Left cardiac atrium (tissue), 4 donors: ENCODE measurements at regions of chr9 and their contacts with region 1.

Region 1: DNA sequence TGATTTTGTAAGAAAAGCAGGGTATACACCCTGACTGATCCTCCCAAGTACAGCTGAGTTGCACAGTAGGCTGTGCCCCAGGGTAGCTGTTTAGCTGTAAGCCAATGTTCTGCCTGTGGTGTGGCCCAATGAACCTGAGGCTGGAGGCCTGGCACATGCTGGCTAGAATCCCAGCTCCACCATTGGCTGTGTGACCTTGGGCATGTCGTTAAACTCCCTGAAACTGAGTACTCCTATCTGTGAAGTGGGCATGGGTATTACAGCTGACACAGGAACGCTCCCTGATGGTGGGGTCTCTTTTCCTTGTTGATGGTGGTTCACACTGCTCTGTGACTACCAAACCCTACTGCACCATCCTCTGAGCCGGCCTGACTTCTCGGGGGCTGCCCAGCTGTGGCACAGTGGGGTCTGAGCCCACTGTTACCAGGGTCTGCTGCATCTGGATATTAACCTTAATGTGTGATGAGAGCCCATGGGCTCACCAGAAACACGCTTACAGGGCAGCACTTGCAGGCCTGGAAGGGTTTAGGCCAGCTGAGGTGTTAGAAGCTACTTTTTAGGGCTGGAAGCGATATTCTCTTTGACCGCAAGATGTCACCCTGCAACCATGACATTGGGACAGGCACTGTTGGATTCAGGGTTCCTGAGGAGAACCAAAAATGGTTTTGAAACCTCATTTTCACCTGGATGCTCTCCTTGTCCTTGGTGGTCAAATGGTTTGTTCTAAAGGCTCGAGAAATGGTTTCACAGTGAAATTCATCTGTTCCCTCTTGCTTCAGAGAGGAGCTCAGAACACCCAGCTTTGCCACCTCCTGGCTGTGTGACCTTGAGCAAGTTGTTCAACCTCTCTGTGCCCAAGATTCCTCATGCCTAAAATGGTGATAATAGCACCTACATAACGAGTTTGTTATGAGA is 6.8 kb upstream of the GADD45G start:
- DNase-seq: peak; percentile 40
- ATAC-seq: peak; percentile 44 to 63

Region 2: DNA sequence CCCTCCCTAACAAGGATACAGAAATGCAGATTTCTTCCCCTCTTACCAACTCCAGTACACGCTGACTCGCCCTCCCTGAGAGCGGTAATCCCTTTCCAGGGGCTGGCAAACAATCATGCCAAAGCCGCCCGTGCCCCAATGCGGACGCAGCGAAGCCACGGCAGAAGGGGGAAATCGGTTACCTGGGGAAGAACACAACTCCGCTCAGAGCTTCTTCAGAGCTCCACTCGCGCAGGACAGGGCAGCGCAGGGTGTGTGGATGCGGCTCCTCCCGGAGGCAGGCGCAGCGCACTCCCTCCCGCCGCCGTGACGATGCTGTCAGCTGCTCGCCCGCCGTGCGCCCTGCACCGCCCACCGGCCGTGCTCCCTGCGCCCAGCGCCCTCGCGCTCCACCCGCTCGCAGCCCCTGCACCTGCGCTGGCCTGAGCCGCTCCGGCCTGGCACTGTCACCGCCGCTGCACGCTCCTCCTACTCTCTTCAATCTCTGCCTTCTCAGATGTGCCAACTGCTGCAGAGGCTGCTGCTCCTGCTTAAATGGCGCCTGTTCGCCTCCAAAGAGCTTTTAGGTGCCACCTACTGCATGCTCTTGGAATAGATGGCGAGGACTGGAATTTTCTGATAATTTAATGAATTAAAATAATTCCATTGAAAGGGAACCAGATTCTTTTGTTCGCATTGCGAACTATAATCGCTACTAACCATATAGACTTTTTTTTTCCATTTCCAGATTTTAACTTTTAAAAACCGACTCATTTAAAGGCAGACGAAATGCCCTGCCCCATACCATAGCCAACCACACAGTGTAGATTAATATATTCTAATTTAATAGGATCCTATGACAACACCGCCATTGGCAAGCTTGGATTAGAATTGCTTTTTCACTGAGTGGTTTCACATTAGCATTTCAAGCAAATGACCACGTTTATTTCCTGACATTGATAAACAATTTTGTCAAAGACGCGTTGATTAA is 1044.9 kb after region 1 on chr9 and contains the start of gene DIRAS2:
- intact Hi-C with region 1: loop called in 1 of 2 experiments (anchors 10 kb)
- DNase-seq: peak; percentile 33
- ATAC-seq: peak; percentile 84 to 99
- total RNA-seq, gene DIRAS2: not detected